ENCODE measurements at regions of chr3 and their contacts with region 1.

Region 1: GRCh38 chr3:134754768-134755559 is 40.1 kb upstream of the EPHB1 start:
- DNase-seq: no peak
- H3K4me3 ChIP-seq: no peak overlapping the region
- H3K27ac ChIP-seq: no peak overlapping the region
- H3K27me3 ChIP-seq: no peaks in the 10 kb centered on the region
- CTCF ChIP-seq: peak; percentile 84

Region 2: GRCh38 chr3:134406331-134407238 is 348.4 kb before region 1 on chr3:
- CTCF ChIA-PET with region 1: no interaction called
- POLR2A ChIA-PET with region 1: no interaction called
- DNase-seq: no peak
- H3K4me3 ChIP-seq: peak overlapping the region; percentile 42
- H3K27ac ChIP-seq: no peak overlapping the region
- H3K27me3 ChIP-seq: peaks cover 2% of the 10 kb centered on the region
- CTCF ChIP-seq: no peak

Region 3: GRCh38 chr3:134600685-134601463 is 154.1 kb before region 1 on chr3:
- CTCF ChIA-PET with region 1: interaction called, 131 read pairs
- POLR2A ChIA-PET with region 1: no interaction called
- DNase-seq: no peak
- H3K4me3 ChIP-seq: peak overlapping the region; percentile 23
- H3K27ac ChIP-seq: no peak overlapping the region
- H3K27me3 ChIP-seq: peaks cover 10% of the 10 kb centered on the region
- CTCF ChIP-seq: peak; percentile 100

Region 4: GRCh38 chr3:134607054-134608022 is 147.6 kb before region 1 on chr3:
- CTCF ChIA-PET with region 1: interaction called, 131 read pairs
- POLR2A ChIA-PET with region 1: no interaction called
- DNase-seq: no peak
- H3K4me3 ChIP-seq: no peak overlapping the region
- H3K27ac ChIP-seq: no peak overlapping the region
- H3K27me3 ChIP-seq: peaks cover 21% of the 10 kb centered on the region
- CTCF ChIP-seq: no peak

Region 5: DNA sequence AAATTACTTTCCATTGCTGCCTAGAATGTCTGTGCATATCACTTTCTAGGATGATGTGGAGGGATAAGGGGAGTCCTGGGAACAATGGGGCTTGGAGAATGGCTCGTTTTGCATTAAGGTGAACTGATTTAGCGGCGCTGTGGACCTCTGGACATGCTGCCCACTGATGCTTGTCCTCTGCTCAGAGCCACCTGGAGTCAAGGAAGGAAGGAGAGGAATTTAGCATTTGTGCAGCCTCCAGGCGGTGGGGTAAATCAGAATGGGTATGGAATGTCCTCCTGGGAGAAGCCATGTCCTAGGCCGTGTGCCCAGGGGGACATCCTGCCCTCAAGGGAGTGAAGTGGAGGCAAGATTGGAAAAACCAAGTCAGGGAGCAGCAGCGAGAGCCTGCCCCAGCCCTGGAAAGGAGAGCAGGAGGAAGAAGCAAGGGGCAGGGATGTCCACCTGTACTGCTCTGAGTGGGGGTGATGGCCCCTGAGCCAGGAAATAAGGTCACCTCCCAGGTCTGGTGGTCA is 141.9 kb before region 1 on chr3:
- CTCF ChIA-PET with region 1: interaction called, 18 read pairs
- POLR2A ChIA-PET with region 1: no interaction called
- DNase-seq: no peak
- H3K4me3 ChIP-seq: no peak overlapping the region
- H3K27ac ChIP-seq: no peak overlapping the region
- H3K27me3 ChIP-seq: peaks cover 18% of the 10 kb centered on the region
- CTCF ChIP-seq: no peak

Region 6: GRCh38 chr3:134630506-134630905 is 124.5 kb before region 1 on chr3:
- CTCF ChIA-PET with region 1: interaction called, 15 read pairs
- POLR2A ChIA-PET with region 1: no interaction called
- DNase-seq: no peak
- H3K4me3 ChIP-seq: no peak overlapping the region
- H3K27ac ChIP-seq: no peak overlapping the region
- H3K27me3 ChIP-seq: no peaks in the 10 kb centered on the region
- CTCF ChIP-seq: peak; percentile 71

Region 7: GRCh38 chr3:134650431-134651346 is 104.3 kb before region 1 on chr3 and contains the start of gene KY:
- CTCF ChIA-PET with region 1: interaction called, 22 read pairs
- POLR2A ChIA-PET with region 1: no interaction called
- DNase-seq: no peak
- H3K4me3 ChIP-seq: peak within 1 kb of the TSS; percentile 58
- H3K27ac ChIP-seq: no peak within 1 kb of the TSS
- H3K27me3 ChIP-seq: peaks cover 5% of the 10 kb centered on the region
- CTCF ChIP-seq: peak; percentile 29; the same call in 1 of the 2 replicates
- polyA plus RNA-seq, gene KY: 0.04 and 0.09 TPM in 2 replicates

Region 8: GRCh38 chr3:134769287-134769868 is 14.4 kb after region 1 on chr3:
- CTCF ChIA-PET with region 1: interaction called, 19 read pairs
- POLR2A ChIA-PET with region 1: no interaction called
- DNase-seq: no peak
- H3K4me3 ChIP-seq: no peak overlapping the region
- H3K27ac ChIP-seq: no peak overlapping the region
- H3K27me3 ChIP-seq: peaks cover 7% of the 10 kb centered on the region
- CTCF ChIP-seq: no peak

Measured in AG04450 (cell line).